ENCODE measurements at regions of chr3 and their contacts with region 1.

Region 1: GRCh38 chr3:196317687-196318467 is at the start of gene DYNLT2B:
- DNase-seq: peak; percentile 87
- H3K4me3 Mint-ChIP-seq: peak within 1 kb of the TSS; percentile 95
- H3K27ac Mint-ChIP-seq: peak within 1 kb of the TSS; percentile 98
- H3K4me1 Mint-ChIP-seq: peaks cover 7% of the 10 kb centered on the region
- H3K27me3 Mint-ChIP-seq: no peaks in the 10 kb centered on the region
- total RNA-seq, gene DYNLT2B: 11.6 and 12.7 TPM in 2 replicates

Region 2: GRCh38 chr3:196287440-196288148 is 30.3 kb before region 1 on chr3 and contains the start of gene PCYT1A:
- intact Hi-C with region 1: loop called (anchors 1 kb)
- DNase-seq: peak; percentile 72
- H3K4me3 Mint-ChIP-seq: peak within 1 kb of the TSS; percentile 99
- H3K27ac Mint-ChIP-seq: peak within 1 kb of the TSS; percentile 95
- H3K4me1 Mint-ChIP-seq: peaks cover 44% of the 10 kb centered on the region
- H3K27me3 Mint-ChIP-seq: no peaks in the 10 kb centered on the region
- total RNA-seq, gene PCYT1A: 54.7 and 57.0 TPM in 2 replicates

Region 3: GRCh38 chr3:196414469-196414868 is 96.6 kb after region 1 on chr3:
- intact Hi-C with region 1: loop called (anchors 2 kb)
- DNase-seq: no peak
- H3K4me3 Mint-ChIP-seq: peak overlapping the region; percentile 23
- H3K27ac Mint-ChIP-seq: peak overlapping the region; percentile 82
- H3K4me1 Mint-ChIP-seq: peaks cover 34% of the 10 kb centered on the region
- H3K27me3 Mint-ChIP-seq: no peaks in the 10 kb centered on the region

Region 4: DNA sequence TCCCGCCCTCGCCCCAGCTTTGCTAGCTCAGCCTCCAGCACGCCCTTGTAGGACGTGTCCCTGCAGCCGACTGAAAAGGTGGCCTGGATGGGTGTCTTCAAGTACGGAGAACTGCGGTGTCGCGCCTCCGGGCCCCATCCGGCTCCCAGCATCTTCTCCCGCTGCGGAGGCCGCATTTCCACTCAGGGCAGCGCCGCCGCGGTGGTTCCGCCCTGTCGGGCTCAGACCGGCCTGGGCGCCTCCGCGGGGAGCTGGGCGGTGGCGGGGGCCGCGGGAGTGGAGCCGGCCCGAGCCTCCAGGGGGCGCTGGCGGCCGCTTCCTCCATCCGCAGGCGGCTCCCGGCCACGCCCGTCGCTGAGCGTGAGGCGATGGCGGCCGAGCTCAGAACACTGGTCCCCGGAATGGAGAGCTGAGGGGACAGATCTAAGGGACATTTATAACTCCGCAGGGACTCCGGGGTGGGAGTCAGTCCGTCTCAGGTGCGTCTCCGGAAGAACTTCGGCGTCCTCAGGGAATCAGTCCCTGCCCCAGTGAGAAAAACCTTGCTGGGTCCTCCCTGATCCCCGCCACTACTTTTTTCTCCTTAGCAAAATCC is 210.9 kb after region 1 on chr3:
- intact Hi-C with region 1: loop called (anchors 5 kb)
- DNase-seq: peak; percentile 76
- H3K4me3 Mint-ChIP-seq: peak overlapping the region; percentile 76
- H3K27ac Mint-ChIP-seq: peak overlapping the region; percentile 75
- H3K4me1 Mint-ChIP-seq: peaks cover 8% of the 10 kb centered on the region
- H3K27me3 Mint-ChIP-seq: peaks cover 6% of the 10 kb centered on the region

Measured in activated T-helper 1 cell treated with anti-CD3 and anti-CD28 coated beads, Interleukin-12 subunit alpha, Interleukin-12 subunit beta, Interleukin-2, Interleukin-4 antibody, amounts not matched to agents 30 ng/mL and 10 ng/mL and 1 ng/mL, durations not matched to agents 14 hours and 24 hours and 36 hours (primary cell).